ENCODE measurements at regions of chr10 and their contacts with region 1.

Region 1: GRCh38 chr10:13787015-13787421 is 200.3 kb downstream of the PRPF18 start:
- DNase-seq: peak; percentile 26
- H3K4me3 ChIP-seq: no peak overlapping the region
- H3K27ac ChIP-seq: peak overlapping the region; percentile 36
- H3K4me1 ChIP-seq: no peaks in the 10 kb centered on the region
- H3K27me3 ChIP-seq: no peaks in the 10 kb centered on the region
- CTCF ChIP-seq: no peak

Region 2: GRCh38 chr10:13528875-13529713 is 257.9 kb before region 1 on chr10 and contains the start of gene BEND7:
- intact Hi-C with region 1: no loop called
- DNase-seq: peak; percentile 23
- H3K4me3 ChIP-seq: peak within 1 kb of the TSS; percentile 54
- H3K27ac ChIP-seq: no peak within 1 kb of the TSS
- H3K4me1 ChIP-seq: no peaks in the 10 kb centered on the region
- H3K27me3 ChIP-seq: no peaks in the 10 kb centered on the region
- CTCF ChIP-seq: no peak
- total RNA-seq, gene BEND7: 19.2 to 20.4 TPM

Region 3: DNA sequence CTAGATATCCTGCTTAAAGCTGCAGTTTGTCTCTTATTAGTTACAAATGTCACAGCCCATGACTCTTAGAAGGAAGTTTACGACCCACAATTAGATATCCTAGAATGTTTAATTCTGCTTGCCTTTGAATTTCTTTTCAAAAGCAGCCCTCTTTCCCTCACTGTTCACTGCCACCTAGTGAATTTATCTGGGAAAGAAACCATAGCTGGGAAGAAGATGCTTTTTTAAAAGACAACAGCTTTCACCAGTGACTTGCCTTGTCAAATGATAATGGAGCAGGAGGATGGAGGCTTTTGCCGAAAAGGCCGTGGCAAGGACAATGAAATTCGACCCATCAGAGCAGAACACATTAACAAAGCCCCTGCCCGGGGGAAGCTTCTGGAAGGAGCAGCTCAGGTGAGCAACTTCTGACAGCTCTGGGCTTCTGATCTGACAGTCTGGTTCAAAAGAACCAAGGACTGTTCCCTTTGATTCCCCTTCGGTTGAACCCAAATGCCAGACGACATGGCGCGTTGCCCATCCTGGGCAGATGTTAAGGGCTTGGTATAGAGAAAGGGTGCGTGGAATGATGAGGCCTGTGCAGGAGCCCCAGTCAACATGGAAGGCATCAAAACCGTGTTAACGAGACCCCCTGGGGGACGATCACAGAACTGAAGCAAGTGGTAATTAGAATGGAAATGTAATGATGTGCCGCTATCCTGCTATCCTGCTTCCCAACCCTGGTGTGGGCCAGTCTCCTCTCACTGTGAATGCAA is 306.9 kb after region 1 on chr10:
- intact Hi-C with region 1: loop called (anchors 10 kb)
- DNase-seq: no peak
- H3K4me3 ChIP-seq: no peak overlapping the region
- H3K27ac ChIP-seq: no peak overlapping the region
- H3K4me1 ChIP-seq: no peaks in the 10 kb centered on the region
- H3K27me3 ChIP-seq: no peaks in the 10 kb centered on the region
- CTCF ChIP-seq: peak; percentile 16

Region 4: DNA sequence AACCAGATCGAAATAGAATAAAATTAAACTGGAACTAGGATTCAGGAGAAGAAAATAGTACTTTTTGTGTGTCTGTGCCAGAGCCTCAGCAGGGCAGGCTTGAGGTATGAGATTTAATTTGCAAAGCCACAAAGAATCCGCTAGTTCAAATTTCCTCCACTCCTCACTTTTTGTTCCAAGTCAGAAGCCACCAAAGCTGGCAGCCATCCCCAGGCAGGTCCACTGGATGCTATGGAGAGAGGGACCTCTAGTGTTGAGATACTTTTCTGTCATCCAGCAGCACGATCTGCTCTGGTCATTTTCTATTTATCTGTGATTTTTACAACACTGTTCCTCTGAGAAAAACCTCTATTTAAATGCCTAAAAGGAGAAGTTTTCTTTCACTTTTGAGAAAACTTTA is 691.6 kb after region 1 on chr10:
- intact Hi-C with region 1: loop called (anchors 10 kb)
- DNase-seq: no peak
- H3K4me3 ChIP-seq: no peak overlapping the region
- H3K27ac ChIP-seq: no peak overlapping the region
- H3K4me1 ChIP-seq: no peaks in the 10 kb centered on the region
- H3K27me3 ChIP-seq: no peaks in the 10 kb centered on the region
- CTCF ChIP-seq: peak; percentile 19